ENCODE measurements at regions of chr2 and their contacts with region 1.

Region 1: GRCh38 chr2:236343400-236344161 is 79.4 kb upstream of the ASB18 start:
- DNase-seq: peak; percentile 56
- H3K4me3 ChIP-seq: no peak overlapping the region
- H3K27ac ChIP-seq: no peak overlapping the region
- H3K4me1 ChIP-seq: no peaks in the 10 kb centered on the region
- H3K27me3 ChIP-seq: no peaks in the 10 kb centered on the region
- CTCF ChIP-seq: peak; percentile 72 to 80

Region 2: GRCh38 chr2:235766278-235766677 is 577.3 kb before region 1 on chr2:
- CTCF ChIA-PET with region 1: no interaction called
- dilution Hi-C with region 1: no loop called
- in situ Hi-C with region 1: no loop called
- intact Hi-C with region 1: loop called (anchors 5 kb)
- DNase-seq: peak; percentile 60
- H3K4me3 ChIP-seq: no peak overlapping the region
- H3K27ac ChIP-seq: peak overlapping the region; percentile 59
- H3K4me1 ChIP-seq: peaks cover 13% of the 10 kb centered on the region
- H3K27me3 ChIP-seq: no peaks in the 10 kb centered on the region
- CTCF ChIP-seq: peak; percentile 85 to 90

Region 3: DNA sequence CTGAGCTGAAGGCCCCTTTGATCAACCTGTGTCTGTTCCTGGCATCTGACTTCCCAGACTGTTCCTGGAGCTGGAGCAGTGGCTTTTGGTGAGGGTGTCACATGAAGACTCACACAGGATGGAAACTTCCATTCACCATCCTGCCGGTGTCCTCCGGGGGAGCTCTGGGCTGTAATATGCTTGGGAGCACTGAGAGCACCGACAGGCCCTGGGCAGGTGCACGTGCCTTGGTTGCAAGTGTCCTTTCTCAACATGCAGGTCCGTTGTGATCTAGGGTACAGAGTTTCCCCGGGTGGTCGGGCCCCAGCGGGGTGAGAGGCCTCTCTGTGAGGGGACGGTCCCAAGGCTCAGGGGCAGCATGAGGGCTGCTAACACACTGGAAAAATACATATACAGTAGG is 150.5 kb before region 1 on chr2:
- CTCF ChIA-PET with region 1: no interaction called
- dilution Hi-C with region 1: no loop called
- in situ Hi-C with region 1: no loop called
- intact Hi-C with region 1: no loop called
- DNase-seq: no peak
- H3K4me3 ChIP-seq: no peak overlapping the region
- H3K27ac ChIP-seq: no peak overlapping the region
- H3K4me1 ChIP-seq: no peaks in the 10 kb centered on the region
- H3K27me3 ChIP-seq: no peaks in the 10 kb centered on the region
- CTCF ChIP-seq: no peak

Region 4: GRCh38 chr2:236440110-236440881 is 96.7 kb after region 1 on chr2:
- CTCF ChIA-PET with region 1: no interaction called
- dilution Hi-C with region 1: no loop called
- in situ Hi-C with region 1: no loop called
- intact Hi-C with region 1: no loop called
- DNase-seq: no peak
- H3K4me3 ChIP-seq: no peak overlapping the region
- H3K27ac ChIP-seq: no peak overlapping the region
- H3K4me1 ChIP-seq: no peaks in the 10 kb centered on the region
- H3K27me3 ChIP-seq: no peaks in the 10 kb centered on the region
- CTCF ChIP-seq: no peak

Region 5: GRCh38 chr2:237052798-237053460 is 709.3 kb after region 1 on chr2:
- CTCF ChIA-PET with region 1: no interaction called
- dilution Hi-C with region 1: loop called (anchors 5 kb)
- in situ Hi-C with region 1: no loop called
- intact Hi-C with region 1: no loop called
- DNase-seq: no peak
- H3K4me3 ChIP-seq: no peak overlapping the region
- H3K27ac ChIP-seq: no peak overlapping the region
- H3K4me1 ChIP-seq: no peaks in the 10 kb centered on the region
- H3K27me3 ChIP-seq: no peaks in the 10 kb centered on the region
- CTCF ChIP-seq: no peak

Region 6: GRCh38 chr2:237060534-237061312 is 717.1 kb after region 1 on chr2:
- CTCF ChIA-PET with region 1: interaction called, 4 read pairs
- dilution Hi-C with region 1: no loop called
- in situ Hi-C with region 1: no loop called
- intact Hi-C with region 1: loop called (anchors 1 kb)
- DNase-seq: peak; percentile 37
- H3K4me3 ChIP-seq: no peak overlapping the region
- H3K27ac ChIP-seq: no peak overlapping the region
- H3K4me1 ChIP-seq: no peaks in the 10 kb centered on the region
- H3K27me3 ChIP-seq: no peaks in the 10 kb centered on the region
- CTCF ChIP-seq: peak; percentile 40 to 67

Region 7: GRCh38 chr2:237072067-237072931 is 728.7 kb after region 1 on chr2:
- CTCF ChIA-PET with region 1: no interaction called
- dilution Hi-C with region 1: no loop called
- in situ Hi-C with region 1: loop called in 1 of 2 experiments (anchors 5 kb)
- intact Hi-C with region 1: loop called (anchors 1 kb)
- DNase-seq: peak; percentile 31
- H3K4me3 ChIP-seq: no peak overlapping the region
- H3K27ac ChIP-seq: no peak overlapping the region
- H3K4me1 ChIP-seq: no peaks in the 10 kb centered on the region
- H3K27me3 ChIP-seq: no peaks in the 10 kb centered on the region
- CTCF ChIP-seq: peak; percentile 94 to 99